Activated CD4-positive, alpha-beta T cell treated with anti-CD3 and anti-CD28 coated beads for 36 hours (primary cell): ENCODE measurements at regions of chr16 and their contacts with region 1.

Region 1: GRCh38 chr16:10964039-10964890 is 19.9 kb downstream of the CLEC16A start:
- DNase-seq: peak; percentile 93
- ATAC-seq: peak; percentile 40
- H3K4me3 Mint-ChIP-seq: peak overlapping the region; percentile 59
- H3K27ac Mint-ChIP-seq: peak overlapping the region; percentile 98
- H3K4me1 Mint-ChIP-seq: peaks cover 74% of the 10 kb centered on the region
- H3K27me3 Mint-ChIP-seq: no peaks in the 10 kb centered on the region

Region 2: GRCh38 chr16:10981697-10982216 is 17.5 kb after region 1 on chr16:
- CTCF ChIA-PET with region 1: interaction called, 20 read pairs
- POLR2A ChIA-PET with region 1: interaction called, 3 read pairs
- intact Hi-C with region 1: no loop called
- DNase-seq: peak; percentile 76
- ATAC-seq: peak; percentile 79
- H3K4me3 Mint-ChIP-seq: peak overlapping the region; percentile 38
- H3K27ac Mint-ChIP-seq: peak overlapping the region; percentile 3
- H3K4me1 Mint-ChIP-seq: peaks cover 41% of the 10 kb centered on the region
- H3K27me3 Mint-ChIP-seq: no peaks in the 10 kb centered on the region

Region 3: DNA sequence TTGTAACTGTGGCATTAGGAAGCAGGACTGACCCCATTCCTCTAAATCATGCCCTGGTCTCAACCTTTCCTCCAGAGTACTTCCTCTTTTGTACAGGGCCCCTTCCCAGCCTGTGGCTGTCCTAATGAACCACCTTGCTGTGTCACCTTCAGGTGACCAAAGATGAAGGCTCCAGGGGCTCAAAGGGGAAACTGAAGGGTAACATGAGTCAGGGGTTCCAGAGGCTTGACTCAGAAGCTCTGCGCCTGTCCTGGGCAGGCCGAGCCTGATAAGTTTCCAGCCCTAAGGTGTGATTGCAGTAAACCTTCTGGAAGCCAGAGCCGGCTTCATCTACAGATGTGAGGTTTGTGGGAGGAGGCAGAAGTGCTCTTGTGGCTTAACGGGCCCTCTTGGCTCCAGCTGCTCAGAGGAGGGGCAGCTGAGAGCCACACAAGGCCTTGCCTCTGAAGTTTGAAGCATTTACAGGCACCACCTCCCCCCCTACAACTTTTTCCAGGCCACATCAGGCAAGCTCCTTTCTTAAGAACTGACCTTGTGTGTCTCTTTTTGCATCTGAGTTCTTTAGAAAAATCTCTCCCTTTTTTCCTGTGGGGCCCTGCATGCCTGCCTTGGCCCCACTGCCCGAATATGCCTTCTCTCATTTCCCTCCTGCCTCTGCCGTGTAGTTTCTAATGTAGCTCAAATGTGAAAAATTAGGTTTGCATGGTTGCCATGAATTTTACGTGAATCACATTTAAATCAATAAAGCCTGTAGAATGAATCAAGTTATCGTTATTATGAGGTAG is 130.0 kb after region 1 on chr16:
- CTCF ChIA-PET with region 1: interaction called, 18 read pairs
- POLR2A ChIA-PET with region 1: interaction called, 13 read pairs
- intact Hi-C with region 1: loop called in 1 of 2 experiments (anchors 2 kb)
- DNase-seq: peak; percentile 87
- ATAC-seq: peak; percentile 77
- H3K4me3 Mint-ChIP-seq: peak overlapping the region; percentile 53
- H3K27ac Mint-ChIP-seq: peak overlapping the region; percentile 99
- H3K4me1 Mint-ChIP-seq: peaks cover 86% of the 10 kb centered on the region
- H3K27me3 Mint-ChIP-seq: no peaks in the 10 kb centered on the region

Region 4: GRCh38 chr16:11232852-11233726 is 268.8 kb after region 1 on chr16:
- CTCF ChIA-PET with region 1: interaction called, 7 read pairs
- POLR2A ChIA-PET with region 1: interaction called, 7 read pairs
- intact Hi-C with region 1: loop called in 1 of 2 experiments (anchors 1 kb)
- DNase-seq: peak; percentile 96
- ATAC-seq: peak; percentile 82
- H3K4me3 Mint-ChIP-seq: peak overlapping the region; percentile 60
- H3K27ac Mint-ChIP-seq: peak overlapping the region; percentile 97
- H3K4me1 Mint-ChIP-seq: peaks cover 80% of the 10 kb centered on the region
- H3K27me3 Mint-ChIP-seq: no peaks in the 10 kb centered on the region

Region 5: GRCh38 chr16:11379420-11379819 is 415.2 kb after region 1 on chr16:
- CTCF ChIA-PET with region 1: interaction called, 6 read pairs
- POLR2A ChIA-PET with region 1: interaction called, 10 read pairs
- intact Hi-C with region 1: loop called in 1 of 2 experiments (anchors 2 kb)
- DNase-seq: peak; percentile 77
- ATAC-seq: peak; percentile 93
- H3K4me3 Mint-ChIP-seq: peak overlapping the region; percentile 32
- H3K27ac Mint-ChIP-seq: peak overlapping the region; percentile 84
- H3K4me1 Mint-ChIP-seq: peaks cover 21% of the 10 kb centered on the region
- H3K27me3 Mint-ChIP-seq: no peaks in the 10 kb centered on the region

Region 6: DNA sequence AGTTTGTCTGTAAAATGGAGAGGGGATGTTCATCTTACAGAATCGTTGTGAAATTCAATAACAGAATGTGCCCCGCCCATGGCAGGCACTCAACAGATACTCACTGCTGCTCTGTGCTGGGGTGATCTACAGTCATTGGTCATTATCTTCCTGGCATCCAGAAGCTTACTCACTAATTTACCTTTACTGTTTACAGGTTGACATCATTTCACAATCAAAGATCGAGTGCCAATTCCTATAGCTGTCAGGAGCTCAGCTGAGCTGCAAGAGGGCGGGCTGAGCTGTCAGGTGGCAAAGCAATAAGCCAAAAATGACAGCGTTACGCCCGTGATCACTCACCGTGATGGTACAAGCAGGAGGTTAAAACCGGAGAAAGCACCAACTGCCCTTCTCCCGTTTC is 571.2 kb after region 1 on chr16:
- CTCF ChIA-PET with region 1: no interaction called
- POLR2A ChIA-PET with region 1: no interaction called
- intact Hi-C with region 1: loop called in 1 of 2 experiments (anchors 2 kb)
- DNase-seq: no peak
- ATAC-seq: no peak
- H3K4me3 Mint-ChIP-seq: no peak overlapping the region
- H3K27ac Mint-ChIP-seq: no peak overlapping the region
- H3K4me1 Mint-ChIP-seq: peaks cover 11% of the 10 kb centered on the region
- H3K27me3 Mint-ChIP-seq: no peaks in the 10 kb centered on the region

Region 7: GRCh38 chr16:11797166-11797956 is 833.1 kb after region 1 on chr16 and contains the start of gene ZC3H7A:
- CTCF ChIA-PET with region 1: no interaction called
- POLR2A ChIA-PET with region 1: no interaction called
- intact Hi-C with region 1: loop called in 1 of 2 experiments (anchors 10 kb)
- DNase-seq: peak; percentile 97
- ATAC-seq: peak; percentile 95
- H3K4me3 Mint-ChIP-seq: peak within 1 kb of the TSS; percentile 92
- H3K27ac Mint-ChIP-seq: peak within 1 kb of the TSS; percentile 94
- H3K4me1 Mint-ChIP-seq: peaks cover 68% of the 10 kb centered on the region
- H3K27me3 Mint-ChIP-seq: no peaks in the 10 kb centered on the region
- total RNA-seq, gene ZC3H7A: 74.1 to 95.1 TPM